Posterior vena cava (tissue), 2 donors: ENCODE measurements at regions of chr4 and their contacts with region 1.

Region 1: GRCh38 chr4:100299046-100299840 is 109.0 kb upstream of the DDIT4L start:
- DNase-seq: no peak

Region 2: GRCh38 chr4:100093091-100093866 is 206.0 kb before region 1 on chr4:
- intact Hi-C with region 1: loop called in 1 of 2 experiments (anchors 10 kb)
- DNase-seq: peak; percentile 90

Region 3: GRCh38 chr4:100257567-100257966 is 41.7 kb before region 1 on chr4:
- intact Hi-C with region 1: no loop called
- DNase-seq: no peak

Region 4: GRCh38 chr4:100843910-100844309 is 544.7 kb after region 1 on chr4:
- intact Hi-C with region 1: no loop called
- DNase-seq: no peak